Mammary epithelial cell (primary cell): ENCODE measurements at regions of chr17 and their contacts with region 1.

Region 1: GRCh38 chr17:385926-386876 is 33.6 kb upstream of the RPH3AL start:
- DNase-seq: peak; percentile 24
- H3K4me3 ChIP-seq: peak overlapping the region in 2 of 3 experiments; percentile 32 to 41
- H3K27ac ChIP-seq: no peak overlapping the region
- H3K4me1 ChIP-seq: peaks cover 6% of the 10 kb centered on the region
- H3K27me3 ChIP-seq: no peaks in the 10 kb centered on the region
- CTCF ChIP-seq: peak in 1 of 2 donors; percentile 60

Region 2: DNA sequence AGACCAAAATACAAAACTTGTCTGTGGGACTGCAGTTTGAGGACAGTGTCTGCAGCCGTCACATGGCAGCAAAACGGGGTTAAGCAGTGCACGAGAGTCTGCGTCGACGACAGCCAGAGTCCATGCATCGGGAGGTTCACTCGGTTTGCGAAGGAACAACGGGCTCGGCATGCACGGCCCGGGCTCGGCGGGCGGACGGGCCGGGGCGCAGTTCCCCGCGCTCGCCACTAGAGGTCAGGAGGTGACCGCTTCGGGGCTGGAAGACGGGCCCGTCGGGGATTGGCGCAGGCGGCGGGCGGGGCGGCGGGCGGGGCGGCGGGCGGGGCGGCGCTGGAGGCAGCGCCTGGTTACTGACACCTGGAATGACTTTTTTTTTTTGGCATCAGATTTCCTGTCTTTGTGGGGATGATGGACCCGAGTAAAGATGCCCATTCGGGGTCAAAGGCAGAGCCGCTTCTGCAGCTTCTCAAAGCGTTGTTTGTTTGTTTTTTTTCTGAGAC is 242.4 kb before region 1 on chr17:
- CTCF ChIA-PET with region 1: no interaction called
- dilution Hi-C with region 1: no loop called
- in situ Hi-C with region 1: no loop called
- intact Hi-C with region 1: loop called (anchors 2 kb)
- DNase-seq: peak; percentile 61
- H3K4me3 ChIP-seq: no peak overlapping the region
- H3K27ac ChIP-seq: no peak overlapping the region
- H3K4me1 ChIP-seq: no peaks in the 10 kb centered on the region
- H3K27me3 ChIP-seq: no peaks in the 10 kb centered on the region
- CTCF ChIP-seq: peak; percentile 26 to 66

Region 3: GRCh38 chr17:164303-165235 is 221.6 kb before region 1 on chr17:
- CTCF ChIA-PET with region 1: no interaction called
- dilution Hi-C with region 1: no loop called
- in situ Hi-C with region 1: no loop called
- intact Hi-C with region 1: loop called (anchors 2 kb)
- DNase-seq: peak; percentile 4
- H3K4me3 ChIP-seq: no peak overlapping the region
- H3K27ac ChIP-seq: no peak overlapping the region
- H3K4me1 ChIP-seq: no peaks in the 10 kb centered on the region
- H3K27me3 ChIP-seq: no peaks in the 10 kb centered on the region
- CTCF ChIP-seq: peak in 1 of 2 donors; percentile 52

Region 4: GRCh38 chr17:282000-282911 is 103.9 kb before region 1 on chr17:
- CTCF ChIA-PET with region 1: no interaction called
- dilution Hi-C with region 1: loop called (anchors 5 kb)
- in situ Hi-C with region 1: no loop called
- intact Hi-C with region 1: no loop called
- DNase-seq: no peak
- H3K4me3 ChIP-seq: no peak overlapping the region
- H3K27ac ChIP-seq: no peak overlapping the region
- H3K4me1 ChIP-seq: no peaks in the 10 kb centered on the region
- H3K27me3 ChIP-seq: no peaks in the 10 kb centered on the region
- CTCF ChIP-seq: no peak